HepG2 (cell line): ENCODE measurements at regions of chr6 and their contacts with region 1.

Region 1: GRCh38 chr6:13289789-13290318 is 38.5 kb downstream of the TBC1D7 start:
- DNase-seq: peak; percentile 98
- ATAC-seq: peak; percentile 97
- H3K4me3 ChIP-seq: peak overlapping the region; percentile 2 to 13 (median 8); a peak in 3 of 6 replicates
- H3K27ac ChIP-seq: peak overlapping the region; percentile 78
- H3K4me1 ChIP-seq: peaks cover 26% of the 10 kb centered on the region
- H3K27me3 ChIP-seq: no peaks in the 10 kb centered on the region
- CTCF ChIP-seq: no peak
- EP300 ChIP-seq: peak in 1 of 2 experiments; percentile 71; a peak in 2 of 4 replicates
- POLR2A ChIP-seq: no peak
- RAD21 ChIP-seq: no peak

Region 2: GRCh38 chr6:13243033-13243432 is 46.8 kb before region 1 on chr6:
- CTCF ChIA-PET with region 1: no interaction called
- POLR2A ChIA-PET with region 1: no interaction called
- in situ Hi-C with region 1: no loop called
- intact Hi-C with region 1: no loop called
- DNase-seq: no peak
- ATAC-seq: no peak
- H3K4me3 ChIP-seq: no peak overlapping the region
- H3K27ac ChIP-seq: no peak overlapping the region
- H3K4me1 ChIP-seq: peaks cover 19% of the 10 kb centered on the region
- H3K27me3 ChIP-seq: peaks cover 0 to 14% of the 10 kb centered on the region in 2 experiments; a peak in 2 of 5 replicates
- CTCF ChIP-seq: no peak
- EP300 ChIP-seq: no peak
- POLR2A ChIP-seq: no peak
- RAD21 ChIP-seq: no peak

Region 3: GRCh38 chr6:13302751-13303667 is 13.2 kb after region 1 on chr6:
- CTCF ChIA-PET with region 1: no interaction called
- POLR2A ChIA-PET with region 1: interaction called, 12 read pairs
- in situ Hi-C with region 1: no loop called
- intact Hi-C with region 1: loop called (anchors 1 kb)
- DNase-seq: peak; percentile 80
- ATAC-seq: peak; percentile 42
- H3K4me3 ChIP-seq: no peak overlapping the region
- H3K27ac ChIP-seq: peak overlapping the region; percentile 44
- H3K4me1 ChIP-seq: peaks cover 45% of the 10 kb centered on the region
- H3K27me3 ChIP-seq: no peaks in the 10 kb centered on the region
- CTCF ChIP-seq: no peak
- EP300 ChIP-seq: peak in 1 of 2 experiments; percentile 50; a peak in 1 of 4 replicates
- POLR2A ChIP-seq: no peak
- RAD21 ChIP-seq: no peak